ENCODE measurements at regions of chrX and their contacts with region 1.

Region 1: GRCh38 chrX:37745354-37745753 is 34.5 kb upstream of the CYBB start:
- DNase-seq: peak; percentile 56 to 85 (median 76)
- ATAC-seq: peak; percentile 79
- H3K4me3 ChIP-seq: no peak overlapping the region
- H3K4me3 Mint-ChIP-seq: peak overlapping the region; percentile 32
- H3K27ac ChIP-seq: no peak overlapping the region
- H3K27ac Mint-ChIP-seq: no peak overlapping the region
- H3K4me1 ChIP-seq: peaks cover 5% of the 10 kb centered on the region
- H3K4me1 Mint-ChIP-seq: peaks cover 9% of the 10 kb centered on the region
- H3K27me3 ChIP-seq: no peaks in the 10 kb centered on the region
- H3K27me3 Mint-ChIP-seq: no peaks in the 10 kb centered on the region
- CTCF ChIP-seq: peak; percentile 67

Region 2: GRCh38 chrX:37759878-37760418 is 14.6 kb after region 1 on chrX:
- CTCF ChIA-PET with region 1: interaction called, 12 read pairs
- POLR2A ChIA-PET with region 1: no interaction called
- intact Hi-C with region 1: no loop called
- DNase-seq: no peak
- ATAC-seq: no peak
- H3K4me3 ChIP-seq: no peak overlapping the region
- H3K4me3 Mint-ChIP-seq: no peak overlapping the region
- H3K27ac ChIP-seq: no peak overlapping the region
- H3K27ac Mint-ChIP-seq: no peak overlapping the region
- H3K4me1 ChIP-seq: peaks cover 10% of the 10 kb centered on the region
- H3K4me1 Mint-ChIP-seq: peaks cover 26% of the 10 kb centered on the region
- H3K27me3 ChIP-seq: no peaks in the 10 kb centered on the region
- H3K27me3 Mint-ChIP-seq: no peaks in the 10 kb centered on the region
- CTCF ChIP-seq: no peak

Region 3: GRCh38 chrX:37825209-37825842 is 80.0 kb after region 1 on chrX:
- CTCF ChIA-PET with region 1: interaction called, 202 read pairs
- POLR2A ChIA-PET with region 1: interaction called, 15 read pairs
- intact Hi-C with region 1: loop called (anchors 1 kb)
- DNase-seq: peak; percentile 25 to 73 (median 54)
- ATAC-seq: peak; percentile 77
- H3K4me3 ChIP-seq: no peak overlapping the region
- H3K4me3 Mint-ChIP-seq: no peak overlapping the region
- H3K27ac ChIP-seq: no peak overlapping the region
- H3K27ac Mint-ChIP-seq: no peak overlapping the region
- H3K4me1 ChIP-seq: peaks cover 11% of the 10 kb centered on the region
- H3K4me1 Mint-ChIP-seq: peaks cover 23% of the 10 kb centered on the region
- H3K27me3 ChIP-seq: no peaks in the 10 kb centered on the region
- H3K27me3 Mint-ChIP-seq: no peaks in the 10 kb centered on the region
- CTCF ChIP-seq: peak; percentile 57

Region 4: GRCh38 chrX:37905436-37906147 is 160.2 kb after region 1 on chrX:
- CTCF ChIA-PET with region 1: no interaction called
- POLR2A ChIA-PET with region 1: no interaction called
- intact Hi-C with region 1: loop called in 1 of 2 experiments (anchors 10 kb)
- DNase-seq: peak in 4 of 9 experiments; percentile 1 to 10 (median 8)
- ATAC-seq: no peak
- H3K4me3 ChIP-seq: no peak overlapping the region
- H3K4me3 Mint-ChIP-seq: no peak overlapping the region
- H3K27ac ChIP-seq: no peak overlapping the region
- H3K27ac Mint-ChIP-seq: no peak overlapping the region
- H3K4me1 ChIP-seq: no peaks in the 10 kb centered on the region
- H3K4me1 Mint-ChIP-seq: peaks cover 1% of the 10 kb centered on the region
- H3K27me3 ChIP-seq: peaks cover 0 to 3% of the 10 kb centered on the region in 2 experiments
- H3K27me3 Mint-ChIP-seq: peaks cover 21% of the 10 kb centered on the region
- CTCF ChIP-seq: no peak

Region 5: DNA sequence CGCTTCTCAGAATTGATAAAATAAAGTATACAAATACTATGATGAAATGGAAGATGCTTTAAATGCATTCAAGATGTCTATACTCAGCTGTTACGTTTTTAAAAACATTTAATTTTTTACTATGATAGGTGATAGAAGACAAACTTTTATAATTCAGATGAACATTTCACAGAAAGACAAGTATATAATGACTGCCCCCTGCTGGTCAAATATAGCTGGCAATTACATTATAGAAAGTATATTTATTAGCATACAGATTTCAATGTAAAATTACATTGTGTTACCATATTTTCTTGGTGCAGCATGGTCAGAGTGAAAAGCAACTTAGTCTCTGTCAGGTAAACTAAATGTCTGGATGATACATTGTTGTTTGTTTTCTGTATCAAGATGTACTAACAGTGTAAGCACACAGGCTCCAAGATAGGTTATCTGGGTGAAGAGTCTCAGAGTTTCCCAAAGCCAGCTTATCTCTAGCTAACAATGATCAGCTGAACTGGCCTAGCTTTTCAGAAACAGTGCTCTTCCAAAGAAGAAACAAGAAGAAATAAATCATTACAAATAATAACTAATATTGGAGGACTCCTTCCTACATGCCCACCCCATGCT is 421.2 kb after region 1 on chrX:
- CTCF ChIA-PET with region 1: interaction called, 3 read pairs
- POLR2A ChIA-PET with region 1: no interaction called
- intact Hi-C with region 1: loop called in 1 of 2 experiments (anchors 1 kb)
- DNase-seq: peak in 4 of 9 experiments; percentile 0 to 29 (median 14)
- ATAC-seq: no peak
- H3K4me3 ChIP-seq: no peak overlapping the region
- H3K4me3 Mint-ChIP-seq: no peak overlapping the region
- H3K27ac ChIP-seq: no peak overlapping the region
- H3K27ac Mint-ChIP-seq: no peak overlapping the region
- H3K4me1 ChIP-seq: no peaks in the 10 kb centered on the region
- H3K4me1 Mint-ChIP-seq: no peaks in the 10 kb centered on the region
- H3K27me3 ChIP-seq: no peaks in the 10 kb centered on the region
- H3K27me3 Mint-ChIP-seq: peaks cover 6% of the 10 kb centered on the region
- CTCF ChIP-seq: peak; percentile 47

Region 6: DNA sequence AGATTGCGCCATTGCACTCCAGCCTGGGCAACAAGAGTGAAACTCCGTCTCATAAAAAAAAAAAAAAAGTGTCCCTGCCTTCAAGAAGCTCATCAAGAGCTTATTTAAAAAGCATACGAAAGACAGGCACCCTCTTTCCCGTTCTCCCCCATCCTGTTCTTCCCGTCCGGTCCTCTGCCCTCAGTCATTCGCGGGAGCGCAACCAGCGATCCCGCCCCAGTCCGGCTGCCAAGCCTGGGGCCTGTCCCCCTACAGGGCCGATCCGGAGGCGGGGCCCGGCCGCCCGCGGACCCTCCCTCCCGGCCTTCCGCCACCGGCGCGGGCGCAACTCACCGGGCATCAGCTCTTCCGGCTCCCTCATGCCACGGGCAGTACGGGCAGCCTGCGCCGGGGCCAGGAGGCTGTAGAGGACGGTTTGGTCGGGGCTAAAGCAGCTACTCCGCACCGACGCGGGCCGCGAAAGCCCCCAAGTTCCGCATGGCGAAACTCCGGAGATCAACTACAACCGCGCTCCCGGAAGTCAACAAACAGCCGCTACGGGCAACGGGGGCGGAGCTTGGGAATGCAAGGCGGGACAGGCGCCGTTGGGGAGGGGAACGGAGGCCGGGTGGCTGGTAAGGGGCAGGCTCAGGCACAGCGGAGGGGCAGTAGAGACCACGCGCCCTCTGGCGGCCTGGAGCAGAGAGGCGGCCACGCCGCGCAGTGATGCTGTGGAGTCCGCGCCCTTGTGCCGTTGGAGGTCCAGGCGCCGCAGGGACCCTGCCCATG is 581.8 kb after region 1 on chrX and contains the start of gene RPGR:
- CTCF ChIA-PET with region 1: interaction called, 5 read pairs
- POLR2A ChIA-PET with region 1: no interaction called
- intact Hi-C with region 1: loop called in 1 of 2 experiments (anchors 10 kb)
- DNase-seq: peak; percentile 81 to 95 (median 89)
- ATAC-seq: peak; percentile 98
- H3K4me3 ChIP-seq: peak within 1 kb of the TSS; percentile 69 to 76
- H3K4me3 Mint-ChIP-seq: peak within 1 kb of the TSS; percentile 93
- H3K27ac ChIP-seq: peak within 1 kb of the TSS; percentile 86 to 96
- H3K27ac Mint-ChIP-seq: peak within 1 kb of the TSS; percentile 90
- H3K4me1 ChIP-seq: peaks cover 13% of the 10 kb centered on the region
- H3K4me1 Mint-ChIP-seq: peaks cover 33% of the 10 kb centered on the region
- H3K27me3 ChIP-seq: no peaks in the 10 kb centered on the region
- H3K27me3 Mint-ChIP-seq: no peaks in the 10 kb centered on the region
- CTCF ChIP-seq: peak; percentile 55
- total RNA-seq, gene RPGR: 16.9 to 17.0 TPM

Measured in CD8-positive, alpha-beta T cell (primary cell).